Activated T-helper 1 cell treated with anti-CD3 and anti-CD28 coated beads, Interleukin-12 subunit alpha, Interleukin-12 subunit beta, Interleukin-2, Interleukin-4 antibody, amounts not matched to agents 30 ng/mL and 10 ng/mL and 1 ng/mL, durations not matched to agents 14 hours and 24 hours and 36 hours (primary cell): ENCODE measurements at regions of chr4 and their contacts with region 1.

Region 1: GRCh38 chr4:139229534-139230039 is 50.4 kb downstream of the MGARP start:
- DNase-seq: no peak
- H3K4me3 Mint-ChIP-seq: no peak overlapping the region
- H3K27ac Mint-ChIP-seq: no peak overlapping the region
- H3K4me1 Mint-ChIP-seq: no peaks in the 10 kb centered on the region
- H3K27me3 Mint-ChIP-seq: no peaks in the 10 kb centered on the region

Region 2: GRCh38 chr4:139099366-139099982 is 130.1 kb before region 1 on chr4:
- intact Hi-C with region 1: loop called (anchors 1 kb)
- DNase-seq: peak; percentile 54
- H3K4me3 Mint-ChIP-seq: no peak overlapping the region
- H3K27ac Mint-ChIP-seq: no peak overlapping the region
- H3K4me1 Mint-ChIP-seq: no peaks in the 10 kb centered on the region
- H3K27me3 Mint-ChIP-seq: no peaks in the 10 kb centered on the region

Region 3: GRCh38 chr4:139163806-139164206 is 65.8 kb before region 1 on chr4:
- intact Hi-C with region 1: no loop called
- DNase-seq: no peak
- H3K4me3 Mint-ChIP-seq: no peak overlapping the region
- H3K27ac Mint-ChIP-seq: no peak overlapping the region
- H3K4me1 Mint-ChIP-seq: peaks cover 17% of the 10 kb centered on the region
- H3K27me3 Mint-ChIP-seq: no peaks in the 10 kb centered on the region

Region 4: DNA sequence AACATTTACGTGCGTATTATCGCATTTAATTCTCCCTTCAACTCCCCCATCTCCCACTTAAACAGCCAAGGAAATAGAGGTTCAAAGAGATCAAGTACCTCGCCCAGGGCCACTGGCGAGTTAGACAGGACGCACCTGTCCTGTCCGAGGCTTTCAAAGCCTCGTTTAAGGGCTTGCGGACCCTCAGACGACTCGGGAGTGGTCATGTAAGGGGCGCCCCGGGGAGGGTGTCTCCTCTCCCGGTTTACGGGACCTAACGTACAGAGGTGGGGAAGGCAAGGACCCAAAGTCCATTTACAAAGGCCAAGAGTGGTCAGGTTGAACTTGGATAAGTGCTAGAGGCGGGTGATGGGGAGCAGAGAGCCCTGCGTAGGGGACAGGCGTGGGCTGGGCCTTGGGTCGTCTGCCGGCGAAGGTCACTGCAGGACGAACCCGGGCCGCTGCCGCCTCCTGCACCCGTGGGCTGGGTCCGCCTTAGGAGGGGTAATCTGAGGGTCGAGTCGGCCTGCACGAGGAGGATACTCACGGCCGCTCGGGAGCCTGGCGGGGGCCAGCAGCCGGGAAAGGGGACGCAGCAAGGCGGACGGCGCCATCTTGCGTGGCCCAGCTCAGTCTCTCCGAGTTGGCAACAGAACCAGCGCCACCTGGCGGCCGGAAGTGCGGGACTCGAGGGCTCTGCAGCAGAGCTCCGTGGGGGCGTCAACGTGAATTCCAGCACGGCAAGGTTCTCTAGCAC is 65.8 kb after region 1 on chr4:
- intact Hi-C with region 1: loop called (anchors 1 kb)
- DNase-seq: peak; percentile 92
- H3K4me3 Mint-ChIP-seq: peak overlapping the region; percentile 93
- H3K27ac Mint-ChIP-seq: peak overlapping the region; percentile 94
- H3K4me1 Mint-ChIP-seq: peaks cover 39% of the 10 kb centered on the region
- H3K27me3 Mint-ChIP-seq: no peaks in the 10 kb centered on the region

Region 5: GRCh38 chr4:139470997-139471665 is 241.5 kb after region 1 on chr4:
- intact Hi-C with region 1: no loop called
- DNase-seq: no peak
- H3K4me3 Mint-ChIP-seq: no peak overlapping the region
- H3K27ac Mint-ChIP-seq: no peak overlapping the region
- H3K4me1 Mint-ChIP-seq: peaks cover 4% of the 10 kb centered on the region
- H3K27me3 Mint-ChIP-seq: no peaks in the 10 kb centered on the region

Region 6: GRCh38 chr4:139530833-139531427 is 301.3 kb after region 1 on chr4:
- intact Hi-C with region 1: loop called (anchors 5 kb)
- DNase-seq: peak; percentile 20
- H3K4me3 Mint-ChIP-seq: no peak overlapping the region
- H3K27ac Mint-ChIP-seq: peak overlapping the region; percentile 37
- H3K4me1 Mint-ChIP-seq: peaks cover 6% of the 10 kb centered on the region
- H3K27me3 Mint-ChIP-seq: no peaks in the 10 kb centered on the region